ENCODE measurements at regions of chr15 and their contacts with region 1.

Region 1: GRCh38 chr15:91049378-91050127 is 27.2 kb upstream of the VPS33B start:
- DNase-seq: no peak
- ATAC-seq: peak; percentile 87
- H3K4me3 ChIP-seq: no peak overlapping the region
- H3K27ac ChIP-seq: no peak overlapping the region
- H3K4me1 ChIP-seq: no peaks in the 10 kb centered on the region
- H3K27me3 ChIP-seq: no peaks in the 10 kb centered on the region

Region 2: GRCh38 chr15:90550919-90551318 is 498.6 kb before region 1 on chr15:
- intact Hi-C with region 1: no loop called
- DNase-seq: no peak
- ATAC-seq: no peak
- H3K4me3 ChIP-seq: no peak overlapping the region
- H3K27ac ChIP-seq: peak overlapping the region; percentile 24
- H3K4me1 ChIP-seq: peaks cover 16% of the 10 kb centered on the region
- H3K27me3 ChIP-seq: no peaks in the 10 kb centered on the region

Region 3: DNA sequence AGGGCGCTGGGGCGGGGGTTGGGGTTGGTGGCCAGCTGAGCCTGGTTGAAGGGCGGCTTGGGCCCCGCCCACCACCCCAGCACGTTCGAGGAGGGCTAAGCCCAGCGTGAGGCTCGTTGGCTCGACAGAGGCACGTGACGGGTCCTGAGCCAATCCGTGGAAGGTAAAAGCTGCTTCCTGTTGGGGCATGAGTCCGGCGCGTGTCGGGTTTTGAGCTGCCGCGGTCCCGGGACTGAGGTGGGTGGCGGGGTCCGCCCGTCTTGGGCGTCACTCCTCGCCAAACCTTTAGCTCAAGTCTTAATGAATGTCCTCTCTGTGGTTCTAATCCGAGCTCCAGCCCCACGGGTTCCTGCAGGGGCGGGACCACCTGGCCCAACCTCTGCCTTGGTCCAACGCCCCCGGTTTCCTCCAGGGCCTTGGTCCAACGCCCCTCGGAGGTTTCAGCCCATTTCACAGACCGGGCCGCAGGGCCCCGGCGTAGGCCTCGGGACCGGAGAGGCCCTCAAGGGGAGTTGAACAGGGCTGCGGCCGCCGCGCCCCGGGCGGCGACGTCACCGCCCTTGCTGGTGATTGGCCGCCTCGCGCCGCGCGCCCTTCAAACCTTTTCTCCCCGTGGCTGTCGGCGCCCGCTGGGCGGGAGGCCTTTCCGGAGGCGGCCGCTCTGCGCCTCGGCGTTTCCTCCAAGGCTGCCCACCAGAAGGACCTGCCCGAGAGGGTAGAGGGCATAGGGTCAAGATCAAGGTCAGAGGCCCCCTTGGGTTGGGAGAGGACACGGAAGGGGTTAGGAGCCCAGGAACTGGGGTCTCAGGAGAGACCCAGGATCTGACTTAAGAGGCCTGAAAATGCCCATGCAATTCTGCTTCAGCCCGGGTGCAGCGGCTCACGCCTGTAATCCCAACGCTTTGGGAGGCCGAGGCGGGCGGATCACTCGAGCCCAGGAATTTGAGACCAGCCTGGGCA is 94.6 kb before region 1 on chr15 and contains the start of gene RCCD1:
- intact Hi-C with region 1: loop called in 2 of 4 experiments (anchors 5 kb)
- DNase-seq: peak; percentile 97 to 99 (median 98)
- ATAC-seq: peak; percentile 94 to 95
- H3K4me3 ChIP-seq: peak within 1 kb of the TSS; percentile 54
- H3K27ac ChIP-seq: peak within 1 kb of the TSS; percentile 71
- H3K4me1 ChIP-seq: no peaks in the 10 kb centered on the region
- H3K27me3 ChIP-seq: no peaks in the 10 kb centered on the region
- total RNA-seq, gene RCCD1: 8.7 to 14.8 (median 13.4) TPM

Region 4: GRCh38 chr15:90994417-90995311 is 54.9 kb before region 1 on chr15 and contains the start of gene PRC1:
- intact Hi-C with region 1: no loop called
- DNase-seq: peak; percentile 99
- ATAC-seq: peak; percentile 100
- H3K4me3 ChIP-seq: peak within 1 kb of the TSS; percentile 77
- H3K27ac ChIP-seq: peak within 1 kb of the TSS; percentile 73
- H3K4me1 ChIP-seq: no peaks in the 10 kb centered on the region
- H3K27me3 ChIP-seq: no peaks in the 10 kb centered on the region
- total RNA-seq, gene PRC1: 5.1 to 8.7 (median 6.9) TPM

Measured in right cardiac atrium (tissue), 5 donors.